ENCODE measurements at regions of chr6 and their contacts with region 1.

Region 1: GRCh38 chr6:121430514-121431460 is 4.7 kb upstream of the GJA1 start:
- DNase-seq: peak in 2 of 3 donors; percentile 15 to 22
- H3K4me3 ChIP-seq: no peak overlapping the region
- H3K27ac ChIP-seq: no peak overlapping the region
- H3K4me1 ChIP-seq: no peaks in the 10 kb centered on the region
- H3K27me3 ChIP-seq: peaks cover 3 to 18% (median 9%) of the 10 kb centered on the region in 5 experiments

Region 2: DNA sequence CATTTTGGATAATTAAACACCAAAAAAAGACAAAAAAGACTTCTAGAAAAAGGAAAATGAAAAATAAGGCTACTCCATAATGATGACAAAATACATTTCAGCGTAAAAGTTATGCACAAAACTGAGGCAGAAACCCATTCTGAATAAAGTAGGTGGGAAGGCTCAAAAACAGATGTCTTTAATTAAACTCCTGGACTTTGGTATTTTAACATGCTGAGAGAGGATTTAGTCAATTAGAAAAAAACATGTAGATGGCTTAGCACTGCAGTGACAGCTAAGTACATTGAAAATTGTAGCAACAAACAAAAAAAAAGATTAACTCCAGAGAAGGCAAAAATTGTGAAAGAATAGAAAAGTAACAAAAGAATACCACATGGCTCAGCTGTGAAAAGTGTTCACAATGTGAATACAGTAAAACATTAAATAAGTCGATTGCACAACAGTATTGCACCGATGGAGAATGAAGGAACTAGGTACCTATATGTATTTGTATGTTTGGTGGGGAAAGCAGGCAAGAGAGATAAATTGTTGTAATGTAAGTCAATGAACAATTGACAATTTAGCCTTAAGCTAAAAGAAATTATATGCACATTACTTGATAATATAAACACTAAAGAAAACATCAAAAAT is 156.0 kb before region 1 on chr6:
- CTCF ChIA-PET with region 1: no interaction called
- POLR2A ChIA-PET with region 1: no interaction called
- DNase-seq: no peak
- H3K4me3 ChIP-seq: no peak overlapping the region
- H3K27ac ChIP-seq: no peak overlapping the region
- H3K4me1 ChIP-seq: no peaks in the 10 kb centered on the region
- H3K27me3 ChIP-seq: no peaks in the 10 kb centered on the region

Region 3: GRCh38 chr6:121451250-121451649 is 20.5 kb after region 1 on chr6:
- CTCF ChIA-PET with region 1: no interaction called
- POLR2A ChIA-PET with region 1: no interaction called
- DNase-seq: no peak
- H3K4me3 ChIP-seq: no peak overlapping the region
- H3K27ac ChIP-seq: no peak overlapping the region
- H3K4me1 ChIP-seq: no peaks in the 10 kb centered on the region
- H3K27me3 ChIP-seq: no peaks in the 10 kb centered on the region

Region 4: GRCh38 chr6:122033539-122034181 is 602.9 kb after region 1 on chr6:
- CTCF ChIA-PET with region 1: interaction called, 10 read pairs
- POLR2A ChIA-PET with region 1: no interaction called
- DNase-seq: peak; percentile 24 to 50 (median 46)
- H3K4me3 ChIP-seq: no peak overlapping the region
- H3K27ac ChIP-seq: no peak overlapping the region
- H3K4me1 ChIP-seq: no peaks in the 10 kb centered on the region
- H3K27me3 ChIP-seq: no peaks in the 10 kb centered on the region

Measured in common myeloid progenitor, CD34-positive (primary cell).